Transverse colon (tissue), 4 donors: ENCODE measurements at regions of chr10 and their contacts with region 1.

Region 1: DNA sequence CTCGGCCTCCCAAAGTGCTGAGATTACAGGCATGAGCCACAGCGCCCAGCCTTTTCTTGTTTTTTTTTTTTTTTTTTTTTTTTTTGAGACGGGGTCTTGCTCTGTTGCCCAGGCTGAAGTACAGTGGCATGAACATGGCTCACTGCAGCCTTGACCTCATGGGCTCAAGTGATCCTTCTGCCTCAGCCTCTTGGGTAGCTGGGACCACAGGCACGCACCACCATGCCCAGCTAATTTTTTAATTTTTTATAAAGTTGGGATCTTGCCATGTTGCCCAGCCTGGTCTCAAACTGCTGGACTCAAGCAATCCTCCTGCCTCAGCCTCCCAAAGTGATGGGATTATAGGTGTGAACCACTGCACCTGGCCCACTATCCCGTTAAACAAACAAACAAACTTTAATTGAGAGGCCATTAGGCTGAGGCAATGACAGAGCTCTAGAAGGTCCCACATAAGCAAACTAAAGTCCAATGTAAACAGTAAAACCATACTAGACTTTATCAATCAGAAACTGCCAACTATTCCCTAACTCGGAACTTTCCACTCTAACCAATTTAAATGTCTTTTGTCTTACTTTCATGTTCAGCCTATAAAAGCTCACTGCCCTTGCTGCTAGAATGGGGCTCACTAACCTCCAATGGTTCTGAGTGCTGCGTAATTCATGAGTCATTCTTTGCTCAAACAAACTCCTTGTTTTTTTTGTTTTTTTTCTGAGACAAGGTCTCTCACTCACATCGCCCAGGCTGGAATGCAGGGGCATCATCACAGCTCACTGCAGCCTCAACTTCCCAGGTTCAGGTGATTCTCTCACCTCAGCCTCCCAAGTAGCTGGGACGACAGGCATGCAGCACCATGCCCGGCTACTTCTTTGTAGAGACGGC is 1.9 kb downstream of the DHX32 start:
- DNase-seq: no peak
- H3K4me3 ChIP-seq: no peak overlapping the region
- H3K27ac ChIP-seq: no peak overlapping the region
- H3K4me1 ChIP-seq: no peaks in the 10 kb centered on the region
- H3K27me3 ChIP-seq: no peaks in the 10 kb centered on the region
- CTCF ChIP-seq: no peak
- EP300 ChIP-seq: no peak
- POLR2A ChIP-seq: no peak

Region 2: GRCh38 chr10:125316449-125316848 is 562.7 kb before region 1 on chr10:
- in situ Hi-C with region 1: no loop called
- intact Hi-C with region 1: no loop called
- DNase-seq: no peak
- H3K4me3 ChIP-seq: no peak overlapping the region
- H3K27ac ChIP-seq: no peak overlapping the region
- H3K4me1 ChIP-seq: no peaks in the 10 kb centered on the region
- H3K27me3 ChIP-seq: no peaks in the 10 kb centered on the region
- CTCF ChIP-seq: no peak
- EP300 ChIP-seq: no peak
- POLR2A ChIP-seq: no peak

Region 3: DNA sequence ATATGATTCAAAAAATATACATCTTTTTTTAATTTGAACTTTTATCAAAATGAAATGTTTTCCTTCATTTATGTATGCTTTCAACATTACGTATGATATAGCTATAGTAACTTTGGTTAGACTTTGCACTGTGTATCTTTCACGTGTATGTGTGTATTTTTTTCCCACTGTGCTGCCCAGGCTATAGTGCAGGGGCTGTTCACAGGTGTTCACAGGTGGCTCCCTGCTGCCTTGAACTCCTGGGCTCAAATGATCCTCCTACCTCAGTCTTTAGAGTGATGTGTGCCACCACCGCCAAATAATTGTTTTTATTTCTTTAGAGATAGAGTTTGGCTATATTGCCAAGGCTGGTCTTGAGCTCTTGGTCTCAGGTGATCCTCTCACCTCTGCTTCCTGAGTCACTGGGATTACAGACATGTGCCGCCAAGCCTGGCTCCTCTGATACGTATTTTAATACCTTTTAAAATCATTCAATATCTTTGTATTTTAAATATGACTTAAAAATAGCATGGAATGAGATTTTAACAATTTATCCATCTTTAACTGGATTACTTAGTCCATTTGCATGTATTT is 46.2 kb after region 1 on chr10:
- in situ Hi-C with region 1: no loop called
- intact Hi-C with region 1: loop called (anchors 2 kb)
- DNase-seq: no peak
- H3K4me3 ChIP-seq: no peak overlapping the region
- H3K27ac ChIP-seq: no peak overlapping the region
- H3K4me1 ChIP-seq: peaks cover 3 to 20% (median 10%) of the 10 kb centered on the region in 4 donors
- H3K27me3 ChIP-seq: no peaks in the 10 kb centered on the region
- CTCF ChIP-seq: no peak
- EP300 ChIP-seq: no peak
- POLR2A ChIP-seq: no peak